CD8-positive, alpha-beta memory T cell (primary cell): ENCODE measurements at regions of chr10 and their contacts with region 1.

Region 1: GRCh38 chr10:3785257-3785850 is 345 bp upstream of the KLF6 start:
- DNase-seq: peak; percentile 99 to 100 (median 99)
- H3K4me3 ChIP-seq: peak overlapping the region; percentile 79
- H3K4me3 Mint-ChIP-seq: peak overlapping the region; percentile 91 to 99 (median 97)
- H3K27ac ChIP-seq: peak overlapping the region; percentile 100
- H3K27ac Mint-ChIP-seq: peak overlapping the region; percentile 93 to 100 (median 99)
- H3K4me1 ChIP-seq: peaks cover 27% of the 10 kb centered on the region
- H3K4me1 Mint-ChIP-seq: peaks cover 27 to 55% (median 36%) of the 10 kb centered on the region in 3 donors
- H3K27me3 ChIP-seq: no peaks in the 10 kb centered on the region
- H3K27me3 Mint-ChIP-seq: peaks cover 0 to 29% of the 10 kb centered on the region in 2 donors

Region 2: DNA sequence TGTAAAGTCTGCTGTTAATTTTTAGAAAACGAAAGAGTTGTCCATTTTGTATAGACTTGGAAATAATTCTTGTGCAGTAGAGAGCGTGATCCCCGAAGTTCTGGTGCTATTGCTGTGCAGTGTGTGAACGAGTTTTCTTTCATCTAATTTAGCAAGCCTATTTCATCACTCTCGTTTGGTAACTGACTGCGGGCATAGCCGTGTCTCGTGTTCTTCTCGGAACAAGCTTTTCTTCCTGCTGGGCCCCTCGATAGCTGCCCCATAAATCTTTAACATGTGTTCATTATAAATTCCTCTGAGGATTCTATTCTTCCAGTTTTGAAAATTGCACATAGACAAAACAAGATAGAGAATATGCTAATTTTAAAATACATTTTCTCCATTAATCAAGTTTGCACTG is 1340.0 kb before region 1 on chr10:
- CTCF ChIA-PET with region 1: no interaction called
- POLR2A ChIA-PET with region 1: no interaction called
- DNase-seq: no peak
- H3K4me3 ChIP-seq: no peak overlapping the region
- H3K4me3 Mint-ChIP-seq: no peak overlapping the region
- H3K27ac ChIP-seq: no peak overlapping the region
- H3K27ac Mint-ChIP-seq: no peak overlapping the region
- H3K4me1 ChIP-seq: no peaks in the 10 kb centered on the region
- H3K4me1 Mint-ChIP-seq: no peaks in the 10 kb centered on the region
- H3K27me3 ChIP-seq: no peaks in the 10 kb centered on the region
- H3K27me3 Mint-ChIP-seq: peaks cover 0 to 5% of the 10 kb centered on the region in 2 donors

Region 3: DNA sequence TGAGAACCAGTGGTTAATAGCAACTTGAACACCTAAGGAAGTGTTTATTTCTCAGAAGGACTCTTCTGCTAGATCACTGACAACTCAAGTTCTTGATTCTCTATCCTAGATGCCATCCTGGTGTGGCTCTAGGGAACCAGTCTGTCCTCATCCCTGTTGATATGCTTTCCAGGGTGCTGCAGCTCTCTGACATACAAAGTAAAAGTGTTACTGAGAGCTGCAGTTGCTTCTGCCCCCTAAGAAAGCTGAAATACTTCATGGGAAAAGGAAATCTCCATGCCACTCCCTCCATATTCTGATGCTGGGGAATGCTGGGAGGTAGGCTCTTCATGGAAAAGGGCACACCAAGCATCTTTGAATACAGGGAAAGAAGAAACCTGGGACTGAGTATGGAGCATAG is 168.5 kb before region 1 on chr10:
- CTCF ChIA-PET with region 1: no interaction called
- POLR2A ChIA-PET with region 1: no interaction called
- DNase-seq: no peak
- H3K4me3 ChIP-seq: no peak overlapping the region
- H3K4me3 Mint-ChIP-seq: no peak overlapping the region
- H3K27ac ChIP-seq: no peak overlapping the region
- H3K27ac Mint-ChIP-seq: no peak overlapping the region
- H3K4me1 ChIP-seq: no peaks in the 10 kb centered on the region
- H3K4me1 Mint-ChIP-seq: no peaks in the 10 kb centered on the region
- H3K27me3 ChIP-seq: no peaks in the 10 kb centered on the region
- H3K27me3 Mint-ChIP-seq: peaks cover 0 to 14% of the 10 kb centered on the region in 2 donors

Region 4: GRCh38 chr10:3757638-3758490 is 27.5 kb before region 1 on chr10:
- CTCF ChIA-PET with region 1: interaction called, 9 read pairs
- POLR2A ChIA-PET with region 1: interaction called, 11 read pairs
- DNase-seq: peak in 4 of 5 donors; percentile 56 to 83 (median 59)
- H3K4me3 ChIP-seq: no peak overlapping the region
- H3K4me3 Mint-ChIP-seq: peak overlapping the region; percentile 9 to 92 (median 81)
- H3K27ac ChIP-seq: peak overlapping the region; percentile 66
- H3K27ac Mint-ChIP-seq: peak overlapping the region; percentile 93 to 100 (median 98)
- H3K4me1 ChIP-seq: peaks cover 36% of the 10 kb centered on the region
- H3K4me1 Mint-ChIP-seq: peaks cover 42 to 82% (median 60%) of the 10 kb centered on the region in 3 donors
- H3K27me3 ChIP-seq: no peaks in the 10 kb centered on the region
- H3K27me3 Mint-ChIP-seq: no peaks in the 10 kb centered on the region

Region 5: GRCh38 chr10:3811291-3811870 is 26.0 kb after region 1 on chr10:
- CTCF ChIA-PET with region 1: interaction called, 120 read pairs
- POLR2A ChIA-PET with region 1: interaction called, 505 read pairs
- DNase-seq: peak in 3 of 5 donors; percentile 32 to 70 (median 56)
- H3K4me3 ChIP-seq: peak overlapping the region; percentile 59
- H3K4me3 Mint-ChIP-seq: peak overlapping the region; percentile 64 to 93 (median 85)
- H3K27ac ChIP-seq: peak overlapping the region; percentile 98
- H3K27ac Mint-ChIP-seq: peak overlapping the region in 1 of 8 donors; percentile 99
- H3K4me1 ChIP-seq: peaks cover 58% of the 10 kb centered on the region
- H3K4me1 Mint-ChIP-seq: peaks cover 17 to 27% (median 19%) of the 10 kb centered on the region in 3 donors
- H3K27me3 ChIP-seq: no peaks in the 10 kb centered on the region
- H3K27me3 Mint-ChIP-seq: peaks cover 0 to 1% of the 10 kb centered on the region in 2 donors

Region 6: DNA sequence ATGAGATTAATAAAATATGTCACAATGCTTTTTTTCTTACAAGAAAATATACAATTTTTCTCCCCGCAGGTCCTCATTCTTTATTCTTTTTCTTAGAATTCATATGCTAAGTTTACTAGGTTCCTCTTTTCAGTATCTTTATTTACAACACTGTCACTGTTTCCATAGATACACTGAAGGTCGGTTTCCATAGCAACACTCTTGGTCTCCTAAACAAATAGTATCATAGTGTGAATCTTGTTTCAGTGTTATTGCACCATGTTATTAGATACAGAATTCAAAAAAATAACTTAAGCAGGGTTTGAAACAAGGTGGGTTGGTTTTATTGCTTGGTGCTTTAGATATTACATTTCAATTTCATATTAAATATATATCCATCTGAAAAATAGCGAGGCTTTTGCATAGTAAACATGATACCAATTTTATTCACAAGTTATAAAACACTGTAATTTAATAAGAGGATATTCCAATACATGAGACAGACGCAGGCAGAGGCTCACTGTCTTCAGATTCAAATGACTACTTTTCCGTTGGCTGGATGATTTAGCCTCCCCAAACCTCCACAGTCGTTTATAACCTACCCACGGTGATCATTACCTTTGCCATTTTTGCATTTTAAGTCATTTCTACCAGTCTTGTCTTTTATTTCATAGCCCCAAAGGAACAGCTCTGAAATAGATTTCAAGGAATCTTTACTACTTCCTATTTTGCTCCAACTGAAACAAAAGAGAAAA is 88.5 kb after region 1 on chr10:
- CTCF ChIA-PET with region 1: interaction called, 9 read pairs
- POLR2A ChIA-PET with region 1: interaction called, 57 read pairs
- DNase-seq: peak in 3 of 5 donors; percentile 58 to 84 (median 59)
- H3K4me3 ChIP-seq: no peak overlapping the region
- H3K4me3 Mint-ChIP-seq: peak overlapping the region; percentile 2 to 70 (median 48)
- H3K27ac ChIP-seq: peak overlapping the region; percentile 91
- H3K27ac Mint-ChIP-seq: peak overlapping the region; percentile 93 to 100 (median 96)
- H3K4me1 ChIP-seq: peaks cover 59% of the 10 kb centered on the region
- H3K4me1 Mint-ChIP-seq: peaks cover 54 to 68% (median 59%) of the 10 kb centered on the region in 3 donors
- H3K27me3 ChIP-seq: no peaks in the 10 kb centered on the region
- H3K27me3 Mint-ChIP-seq: no peaks in the 10 kb centered on the region

Region 7: GRCh38 chr10:3935141-3935540 is 149.8 kb after region 1 on chr10:
- CTCF ChIA-PET with region 1: no interaction called
- POLR2A ChIA-PET with region 1: interaction called, 17 read pairs
- DNase-seq: peak in 4 of 5 donors; percentile 13 to 70 (median 34)
- H3K4me3 ChIP-seq: peak overlapping the region; percentile 36
- H3K4me3 Mint-ChIP-seq: peak overlapping the region; percentile 52 to 87 (median 85)
- H3K27ac ChIP-seq: peak overlapping the region; percentile 69
- H3K27ac Mint-ChIP-seq: peak overlapping the region; percentile 85 to 98 (median 95)
- H3K4me1 ChIP-seq: peaks cover 15% of the 10 kb centered on the region
- H3K4me1 Mint-ChIP-seq: peaks cover 22 to 45% (median 35%) of the 10 kb centered on the region in 3 donors
- H3K27me3 ChIP-seq: no peaks in the 10 kb centered on the region
- H3K27me3 Mint-ChIP-seq: peaks cover 0 to 1% of the 10 kb centered on the region in 2 donors

Region 8: DNA sequence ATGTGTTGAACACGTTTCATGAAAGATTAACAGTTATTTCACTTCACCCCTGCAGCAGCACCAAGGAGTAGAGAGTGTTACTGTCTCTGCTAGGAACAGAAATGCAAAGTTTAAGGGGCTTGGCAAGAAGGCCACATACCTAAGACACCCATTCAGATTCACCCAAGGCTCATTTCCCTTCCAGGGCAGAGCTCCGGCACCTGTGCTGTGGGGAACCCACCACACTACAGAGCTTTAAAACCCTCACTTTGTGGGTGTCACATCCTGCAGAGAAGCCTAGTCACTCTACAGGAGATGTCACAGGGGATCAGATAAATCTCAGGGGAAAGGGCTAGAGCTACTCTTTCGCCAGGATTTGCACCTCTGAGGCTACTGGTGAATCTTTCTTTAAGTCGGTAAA is 175.7 kb after region 1 on chr10:
- CTCF ChIA-PET with region 1: interaction called, 3 read pairs
- POLR2A ChIA-PET with region 1: interaction called, 29 read pairs
- DNase-seq: peak; percentile 49 to 81 (median 64)
- H3K4me3 ChIP-seq: no peak overlapping the region
- H3K4me3 Mint-ChIP-seq: peak overlapping the region; percentile 18 to 80 (median 76)
- H3K27ac ChIP-seq: no peak overlapping the region
- H3K27ac Mint-ChIP-seq: peak overlapping the region; percentile 64 to 91 (median 84)
- H3K4me1 ChIP-seq: peaks cover 26% of the 10 kb centered on the region
- H3K4me1 Mint-ChIP-seq: peaks cover 38 to 63% (median 45%) of the 10 kb centered on the region in 3 donors
- H3K27me3 ChIP-seq: no peaks in the 10 kb centered on the region
- H3K27me3 Mint-ChIP-seq: no peaks in the 10 kb centered on the region